Heart left ventricle (tissue), 16 donors: ENCODE measurements at regions of chr9 and their contacts with region 1.

Region 1: GRCh38 chr9:79662537-79662956 is 90.8 kb downstream of the TLE4 start:
- DNase-seq: no peak
- ATAC-seq: peak in 1 of 4 donors; percentile 47
- H3K4me3 ChIP-seq: peak overlapping the region in 1 of 12 donors; percentile 20
- H3K27ac ChIP-seq: peak overlapping the region in 4 of 12 donors; percentile 5 to 49 (median 25)
- H3K4me1 ChIP-seq: peaks cover 0 to 46% (median 17%) of the 10 kb centered on the region in 12 donors
- H3K27me3 ChIP-seq: no peaks in the 10 kb centered on the region
- CTCF ChIP-seq: no peak
- POLR2A ChIP-seq: no peak

Region 2: DNA sequence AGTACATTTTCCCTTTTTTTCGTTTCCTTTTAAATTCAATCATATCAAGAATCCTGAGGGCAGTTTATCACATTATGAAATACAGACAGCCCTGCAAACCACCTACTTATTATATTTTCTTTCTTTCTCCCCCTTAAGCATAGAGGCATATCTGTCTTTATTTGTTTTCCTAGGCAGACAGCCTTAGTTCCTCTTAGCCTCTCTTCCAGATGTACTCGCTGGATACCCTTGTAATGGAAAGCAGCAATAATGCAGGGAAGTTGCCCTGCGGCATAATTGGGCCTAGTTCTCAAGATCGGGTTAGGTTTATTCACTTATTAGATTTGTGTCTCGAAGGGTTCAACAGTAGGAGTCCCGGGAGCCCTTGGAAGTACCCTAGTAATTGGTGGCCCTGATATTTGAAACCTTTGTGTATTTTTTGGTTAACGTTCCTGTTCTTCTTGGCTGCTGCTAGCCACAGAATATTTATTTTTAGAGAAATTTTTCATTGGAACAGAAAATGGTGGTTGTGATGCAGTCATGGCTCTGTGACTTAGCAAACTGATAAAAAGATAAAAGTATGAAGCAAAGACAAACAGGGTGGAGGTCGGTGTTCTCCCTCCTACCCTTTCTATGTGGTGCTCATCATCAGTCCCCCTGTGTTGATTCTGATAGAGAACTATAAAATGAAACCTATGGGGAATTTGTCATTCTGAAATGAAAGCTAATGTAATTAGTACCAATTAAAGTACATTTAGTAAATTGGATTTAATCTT is 84.4 kb before region 1 on chr9:
- intact Hi-C with region 1: loop called in 6 of 10 experiments (anchors 5 to 10 kb)
- DNase-seq: no peak
- ATAC-seq: peak in 3 of 4 donors; percentile 25 to 39 (median 36)
- H3K4me3 ChIP-seq: peak overlapping the region in 5 of 12 donors; percentile 2 to 30 (median 14)
- H3K27ac ChIP-seq: peak overlapping the region; percentile 3 to 72 (median 48)
- H3K4me1 ChIP-seq: peaks cover 0 to 79% (median 41%) of the 10 kb centered on the region in 12 donors
- H3K27me3 ChIP-seq: no peaks in the 10 kb centered on the region
- CTCF ChIP-seq: no peak
- POLR2A ChIP-seq: no peak